Brain microvascular endothelial cell (primary cell): ENCODE measurements at regions of chr13 and their contacts with region 1.

Region 1: DNA sequence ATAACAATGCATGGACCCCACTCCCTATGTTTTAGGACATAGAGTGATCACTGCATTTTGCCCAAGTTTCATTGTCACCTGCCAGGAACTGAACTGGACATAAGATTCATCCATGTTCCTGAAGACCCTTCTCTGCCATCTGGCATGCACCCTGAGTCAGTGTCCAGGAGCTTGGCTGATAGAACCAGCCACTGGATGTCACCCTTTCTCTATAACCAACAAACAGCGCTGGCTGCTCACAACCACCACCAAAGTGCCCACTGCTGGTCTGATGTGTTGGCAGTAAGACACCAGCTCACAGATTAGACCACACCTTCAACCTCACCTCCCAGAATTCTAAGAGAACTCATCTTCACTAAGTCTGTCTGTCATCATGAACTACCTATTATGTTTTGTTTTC is 333.4 kb downstream of the ITGBL1 start:
- DNase-seq: peak; percentile 43
- H3K4me3 ChIP-seq: no peak overlapping the region
- H3K27ac ChIP-seq: no peak overlapping the region
- H3K27me3 ChIP-seq: peaks cover 1% of the 10 kb centered on the region
- CTCF ChIP-seq: peak; percentile 79

Region 2: DNA sequence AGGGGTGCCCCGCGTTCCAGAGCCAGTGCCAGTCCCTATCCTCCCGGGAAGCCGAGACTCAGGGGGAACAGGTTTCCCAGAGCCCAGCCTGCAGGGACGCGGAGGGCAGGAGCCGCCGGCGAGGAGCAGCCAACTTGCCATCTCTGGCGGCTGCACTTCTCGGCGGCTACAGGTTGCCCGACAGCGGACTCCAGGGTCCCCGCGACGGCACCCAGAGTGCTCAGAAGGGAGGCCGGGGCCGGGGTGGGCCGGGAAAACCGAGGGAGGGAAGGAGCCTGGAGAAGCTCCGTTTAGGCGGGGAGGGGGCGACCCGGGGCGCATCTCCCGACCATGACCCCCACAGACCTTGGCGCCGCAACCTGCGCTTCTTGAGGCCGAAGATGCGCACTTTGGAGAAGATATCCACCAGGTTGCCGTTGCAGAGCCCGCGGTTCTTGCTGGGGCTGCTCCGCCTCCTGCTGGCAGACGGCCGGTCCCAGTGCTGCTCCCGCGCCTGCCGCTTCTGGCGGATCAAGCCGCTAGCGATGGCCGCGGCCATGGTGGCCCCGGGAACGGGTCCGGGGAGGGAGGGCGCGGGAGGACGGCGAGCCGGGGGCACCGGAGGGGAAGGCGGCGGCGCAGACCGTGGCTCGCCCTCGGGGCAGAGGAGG is 130.4 kb after region 1 on chr13:
- in situ Hi-C with region 1: loop called (anchors 25 kb)
- DNase-seq: peak; percentile 4
- H3K4me3 ChIP-seq: peak overlapping the region; percentile 30
- H3K27ac ChIP-seq: no peak overlapping the region
- H3K27me3 ChIP-seq: peaks cover 51% of the 10 kb centered on the region
- CTCF ChIP-seq: peak; percentile 72

Region 3: GRCh38 chr13:102012299-102013293 is 226.7 kb after region 1 on chr13:
- in situ Hi-C with region 1: no loop called
- DNase-seq: no peak
- H3K4me3 ChIP-seq: no peak overlapping the region
- H3K27ac ChIP-seq: no peak overlapping the region
- H3K27me3 ChIP-seq: no peaks in the 10 kb centered on the region
- CTCF ChIP-seq: no peak